Activated CD8-positive, alpha-beta memory T cell treated with anti-CD3 and anti-CD28 coated beads, Interleukin-2, amount 10 ng/mL, durations not matched to agents 7 days and 5 days (primary cell): ENCODE measurements at regions of chr16 and their contacts with region 1.

Region 1: GRCh38 chr16:30429678-30430427 is at the start of gene DCTPP1:
- DNase-seq: peak; percentile 99
- ATAC-seq: peak; percentile 98
- H3K4me3 Mint-ChIP-seq: no peak within 1 kb of the TSS
- H3K27ac Mint-ChIP-seq: no peak within 1 kb of the TSS
- H3K4me1 Mint-ChIP-seq: peaks cover 38% of the 10 kb centered on the region
- H3K27me3 Mint-ChIP-seq: no peaks in the 10 kb centered on the region
- total RNA-seq, gene DCTPP1: 72.0 to 108 TPM

Region 2: GRCh38 chr16:30458561-30459394 is 28.9 kb after region 1 on chr16:
- CTCF ChIA-PET with region 1: interaction called, 21 read pairs
- DNase-seq: peak; percentile 97
- ATAC-seq: peak; percentile 96
- H3K4me3 Mint-ChIP-seq: peak overlapping the region; percentile 53
- H3K27ac Mint-ChIP-seq: peak overlapping the region; percentile 96
- H3K4me1 Mint-ChIP-seq: peaks cover 64% of the 10 kb centered on the region
- H3K27me3 Mint-ChIP-seq: peaks cover 2% of the 10 kb centered on the region

Region 3: GRCh38 chr16:30526823-30527635 is 97.2 kb after region 1 on chr16:
- CTCF ChIA-PET with region 1: interaction called, 21 read pairs
- DNase-seq: peak; percentile 98
- ATAC-seq: peak; percentile 90
- H3K4me3 Mint-ChIP-seq: peak overlapping the region; percentile 61
- H3K27ac Mint-ChIP-seq: peak overlapping the region; percentile 63
- H3K4me1 Mint-ChIP-seq: peaks cover 22% of the 10 kb centered on the region
- H3K27me3 Mint-ChIP-seq: no peaks in the 10 kb centered on the region

Region 4: GRCh38 chr16:30571695-30572600 is 142.1 kb after region 1 on chr16 and contains the start of gene ZNF688:
- CTCF ChIA-PET with region 1: interaction called, 11 read pairs
- DNase-seq: peak; percentile 98
- ATAC-seq: peak; percentile 86
- H3K4me3 Mint-ChIP-seq: peak within 1 kb of the TSS; percentile 99
- H3K27ac Mint-ChIP-seq: peak within 1 kb of the TSS; percentile 94
- H3K4me1 Mint-ChIP-seq: peaks cover 52% of the 10 kb centered on the region
- H3K27me3 Mint-ChIP-seq: no peaks in the 10 kb centered on the region
- total RNA-seq, gene ZNF688: 14.5 to 14.7 TPM

Region 5: GRCh38 chr16:30615358-30616091 is 185.7 kb after region 1 on chr16:
- CTCF ChIA-PET with region 1: interaction called, 21 read pairs
- DNase-seq: peak; percentile 88
- ATAC-seq: peak; percentile 87
- H3K4me3 Mint-ChIP-seq: no peak overlapping the region
- H3K27ac Mint-ChIP-seq: no peak overlapping the region
- H3K4me1 Mint-ChIP-seq: peaks cover 15% of the 10 kb centered on the region
- H3K27me3 Mint-ChIP-seq: peaks cover 4% of the 10 kb centered on the region